Endothelial cell of umbilical vein (primary cell): ENCODE measurements at regions of chr3 and their contacts with region 1.

Region 1: GRCh38 chr3:45656575-45657363 is 32.4 kb upstream of the SACM1L start:
- DNase-seq: peak; percentile 90
- H3K4me3 ChIP-seq: no peak overlapping the region
- H3K27ac ChIP-seq: no peak overlapping the region
- H3K4me1 ChIP-seq: peaks cover 17% of the 10 kb centered on the region
- H3K27me3 ChIP-seq: no peaks in the 10 kb centered on the region
- CTCF ChIP-seq: peak; percentile 91 to 93
- POLR2A ChIP-seq: no peak

Region 2: DNA sequence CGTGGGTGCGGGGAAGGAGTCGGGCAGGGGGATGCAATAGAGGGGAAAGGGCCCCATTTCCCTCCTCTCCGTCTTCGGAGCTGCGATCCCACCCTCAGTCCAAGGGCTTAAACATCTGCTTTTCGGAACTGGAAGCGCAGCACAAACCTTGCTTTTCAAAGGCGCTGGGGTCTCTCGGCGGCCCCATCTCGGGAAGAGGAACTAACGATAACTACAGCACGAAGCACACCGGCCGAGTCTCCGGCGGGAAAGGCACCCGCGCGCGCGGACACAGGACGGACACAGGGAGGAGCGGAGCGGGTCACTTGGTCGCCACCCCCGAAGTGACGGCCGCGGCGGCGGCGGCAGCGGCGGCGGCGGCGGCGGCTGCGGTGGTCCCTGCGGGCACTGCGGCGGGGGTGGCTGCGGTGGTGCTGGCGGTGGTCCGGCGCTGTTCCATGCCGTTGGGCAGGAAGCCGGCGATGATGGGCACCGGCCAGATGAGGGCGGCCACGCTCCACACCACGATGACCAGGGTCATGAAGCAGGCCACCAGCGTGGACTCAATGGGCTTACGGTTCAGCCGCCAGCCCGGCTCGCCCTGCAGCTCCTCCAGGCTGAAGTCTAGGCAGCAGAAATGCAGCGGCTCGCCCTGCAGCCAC is 431.8 kb before region 1 on chr3:
- CTCF ChIA-PET with region 1: interaction called, 6 read pairs
- POLR2A ChIA-PET with region 1: no interaction called
- dilution Hi-C with region 1: no loop called
- intact Hi-C with region 1: loop called (anchors 2 kb)
- DNase-seq: peak; percentile 64
- H3K4me3 ChIP-seq: peak overlapping the region; percentile 12 to 76 (median 45)
- H3K27ac ChIP-seq: no peak overlapping the region
- H3K4me1 ChIP-seq: peaks cover 10% of the 10 kb centered on the region
- H3K27me3 ChIP-seq: peaks cover 20 to 42% of the 10 kb centered on the region in 2 experiments
- CTCF ChIP-seq: peak; percentile 52 to 72
- POLR2A ChIP-seq: no peak

Region 3: GRCh38 chr3:45516829-45517228 is 139.9 kb before region 1 on chr3:
- CTCF ChIA-PET with region 1: interaction called, 109 read pairs
- POLR2A ChIA-PET with region 1: no interaction called
- dilution Hi-C with region 1: loop called (anchors 10 kb)
- intact Hi-C with region 1: no loop called
- DNase-seq: peak; percentile 33
- H3K4me3 ChIP-seq: no peak overlapping the region
- H3K27ac ChIP-seq: no peak overlapping the region
- H3K4me1 ChIP-seq: peaks cover 15% of the 10 kb centered on the region
- H3K27me3 ChIP-seq: no peaks in the 10 kb centered on the region
- CTCF ChIP-seq: no peak
- POLR2A ChIP-seq: no peak

Region 4: DNA sequence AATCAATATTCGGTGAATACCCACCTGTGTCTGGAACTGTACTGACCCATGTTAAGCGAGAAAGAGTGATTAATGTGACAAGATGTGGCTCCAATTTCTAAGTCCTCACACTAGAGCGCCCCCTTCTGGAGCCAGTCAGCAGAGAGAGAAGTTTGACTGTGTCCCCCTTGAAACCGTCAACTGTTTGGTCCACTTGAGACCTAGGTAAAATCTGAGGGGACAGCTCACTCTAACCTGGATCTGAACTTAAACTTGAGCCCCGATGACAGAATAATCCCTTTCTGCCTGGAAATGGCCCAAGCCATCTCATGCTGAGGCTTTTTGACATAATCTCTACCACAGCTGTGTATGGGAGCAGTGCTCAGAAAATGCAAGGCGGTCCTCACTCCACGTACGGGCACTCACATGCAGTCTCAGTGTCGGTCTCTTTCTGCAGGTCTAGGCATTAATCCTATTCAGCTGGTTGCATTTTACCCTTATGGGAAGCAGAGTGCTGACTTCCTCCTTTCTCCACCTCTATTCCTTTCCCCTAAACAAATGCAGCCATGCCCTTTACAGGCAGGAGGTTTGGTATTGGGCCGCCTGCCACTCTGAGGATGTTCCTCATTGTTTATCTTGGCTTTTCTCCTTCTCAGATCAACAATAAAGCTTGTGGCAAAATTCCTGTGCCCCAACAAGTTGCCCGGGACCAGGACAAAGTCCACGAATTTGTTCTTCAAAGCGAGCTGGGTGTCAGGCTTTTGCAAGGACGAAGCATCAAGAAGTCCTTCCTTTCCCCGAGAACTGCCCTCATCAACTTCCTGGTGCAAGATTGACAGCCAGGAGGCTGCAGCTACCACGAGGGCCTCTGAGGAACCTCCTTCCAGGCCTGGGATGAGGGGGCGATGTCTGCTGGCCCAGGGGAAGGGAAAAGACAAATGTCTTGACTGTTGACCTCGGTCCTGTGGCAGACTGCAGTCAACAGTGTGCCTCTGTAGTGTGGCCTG is 109.8 kb before region 1 on chr3:
- CTCF ChIA-PET with region 1: interaction called, 38 read pairs
- POLR2A ChIA-PET with region 1: no interaction called
- dilution Hi-C with region 1: no loop called
- intact Hi-C with region 1: no loop called
- DNase-seq: no peak
- H3K4me3 ChIP-seq: no peak overlapping the region
- H3K27ac ChIP-seq: no peak overlapping the region
- H3K4me1 ChIP-seq: peaks cover 26% of the 10 kb centered on the region
- H3K27me3 ChIP-seq: no peaks in the 10 kb centered on the region
- CTCF ChIP-seq: peak; percentile 46 to 56
- POLR2A ChIP-seq: no peak

Region 5: DNA sequence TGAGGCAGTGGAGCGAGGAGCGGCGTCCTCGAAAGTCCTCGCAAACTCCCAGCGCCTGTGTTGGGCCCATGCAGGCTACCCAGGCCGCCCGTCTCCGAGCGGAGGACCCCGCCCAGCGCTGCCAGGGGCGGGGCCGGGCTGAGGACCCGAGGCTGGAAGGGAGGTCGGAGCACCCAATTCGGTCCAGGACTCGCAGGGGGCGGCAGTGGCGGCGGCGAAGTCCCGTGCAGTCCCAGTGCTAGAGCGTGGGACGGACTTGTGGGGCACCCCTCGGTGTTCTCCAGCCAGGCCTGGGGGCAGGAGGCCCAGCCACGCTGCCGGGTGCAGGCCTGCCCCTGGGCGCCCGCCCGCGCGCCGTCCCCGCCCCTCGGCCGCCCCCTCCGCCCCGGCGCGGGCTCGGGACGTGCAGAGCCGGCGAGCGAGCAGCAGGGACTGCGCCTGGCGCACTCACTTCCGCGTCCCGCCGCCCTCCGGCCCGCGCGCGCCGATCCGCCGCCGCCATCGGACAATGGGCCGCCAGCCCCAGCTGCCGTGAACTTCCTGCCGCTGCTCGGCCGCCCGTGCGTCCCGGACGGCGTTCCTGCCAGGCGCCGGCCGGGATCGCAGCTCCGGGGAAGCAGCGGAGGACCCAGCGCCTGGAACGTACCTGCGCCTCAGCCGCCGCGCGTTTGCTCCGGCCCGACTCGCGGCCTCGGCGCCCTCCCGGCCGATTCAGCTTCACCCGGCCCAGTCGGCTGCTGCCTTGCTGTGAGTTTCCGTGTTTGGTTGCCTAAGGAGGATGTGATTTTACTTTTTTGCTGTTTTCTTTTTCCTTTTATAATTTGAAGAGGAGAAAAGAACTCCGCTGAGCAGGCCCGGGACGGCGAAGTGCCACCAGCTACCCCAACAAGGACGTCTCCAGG is 62.8 kb before region 1 on chr3:
- CTCF ChIA-PET with region 1: interaction called, 62 read pairs
- POLR2A ChIA-PET with region 1: interaction called, 3 read pairs
- dilution Hi-C with region 1: no loop called
- intact Hi-C with region 1: loop called (anchors 1 kb)
- DNase-seq: peak; percentile 77
- H3K4me3 ChIP-seq: peak overlapping the region; percentile 61 to 67 (median 64)
- H3K27ac ChIP-seq: peak overlapping the region; percentile 70
- H3K4me1 ChIP-seq: peaks cover 38% of the 10 kb centered on the region
- H3K27me3 ChIP-seq: no peaks in the 10 kb centered on the region
- CTCF ChIP-seq: no peak
- POLR2A ChIP-seq: peak; percentile 59

Region 6: GRCh38 chr3:45631486-45631885 is 25.3 kb before region 1 on chr3:
- CTCF ChIA-PET with region 1: interaction called, 21 read pairs
- POLR2A ChIA-PET with region 1: no interaction called
- dilution Hi-C with region 1: no loop called
- intact Hi-C with region 1: loop called (anchors 2 kb)
- DNase-seq: peak; percentile 81
- H3K4me3 ChIP-seq: peak overlapping the region in 1 of 3 experiments; percentile 27
- H3K27ac ChIP-seq: peak overlapping the region; percentile 78
- H3K4me1 ChIP-seq: peaks cover 19% of the 10 kb centered on the region
- H3K27me3 ChIP-seq: no peaks in the 10 kb centered on the region
- CTCF ChIP-seq: no peak
- POLR2A ChIP-seq: no peak